HAP-1 (cell line): ENCODE measurements at regions of chrX and their contacts with region 1.

Region 1: GRCh38 chrX:9708904-9709553 is 56.6 kb downstream of the GPR143 start:
- DNase-seq: peak; percentile 72 to 88
- H3K4me3 ChIP-seq: no peak overlapping the region
- H3K4me1 ChIP-seq: peaks cover 3% of the 10 kb centered on the region
- H3K27me3 ChIP-seq: no peaks in the 10 kb centered on the region

Region 2: DNA sequence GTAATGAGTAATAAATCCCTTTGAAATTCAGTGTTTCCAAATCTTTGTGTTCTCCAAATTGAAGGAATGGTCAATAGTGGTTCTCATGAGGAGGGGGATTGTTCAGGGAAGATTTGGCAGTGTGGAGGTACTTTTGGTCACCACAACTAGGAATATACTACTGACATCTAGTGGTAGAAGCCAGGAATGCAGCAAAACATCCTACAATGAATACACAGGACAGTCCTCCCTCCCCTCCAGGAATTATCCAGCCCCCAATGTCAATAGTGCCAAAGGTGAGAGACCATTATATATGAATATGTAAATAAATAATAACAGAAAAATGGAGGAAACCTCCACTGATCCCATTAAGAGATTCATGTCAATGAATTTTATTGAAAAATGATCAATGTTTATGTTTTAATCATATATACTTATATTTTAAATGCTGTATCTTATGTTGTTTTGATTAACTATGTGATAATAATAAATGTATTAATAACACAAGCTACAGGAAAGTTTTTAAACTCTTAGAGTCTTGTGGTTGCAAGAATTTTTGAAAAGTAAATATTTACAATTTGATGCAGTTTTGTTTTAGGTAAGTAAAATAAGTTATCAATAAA is 893.5 kb before region 1 on chrX:
- in situ Hi-C with region 1: loop called (anchors 10 kb)
- DNase-seq: peak; percentile 12 to 54
- H3K4me3 ChIP-seq: no peak overlapping the region
- H3K4me1 ChIP-seq: no peaks in the 10 kb centered on the region
- H3K27me3 ChIP-seq: peaks cover 2% of the 10 kb centered on the region; the same call in 1 of the 2 replicates

Region 3: DNA sequence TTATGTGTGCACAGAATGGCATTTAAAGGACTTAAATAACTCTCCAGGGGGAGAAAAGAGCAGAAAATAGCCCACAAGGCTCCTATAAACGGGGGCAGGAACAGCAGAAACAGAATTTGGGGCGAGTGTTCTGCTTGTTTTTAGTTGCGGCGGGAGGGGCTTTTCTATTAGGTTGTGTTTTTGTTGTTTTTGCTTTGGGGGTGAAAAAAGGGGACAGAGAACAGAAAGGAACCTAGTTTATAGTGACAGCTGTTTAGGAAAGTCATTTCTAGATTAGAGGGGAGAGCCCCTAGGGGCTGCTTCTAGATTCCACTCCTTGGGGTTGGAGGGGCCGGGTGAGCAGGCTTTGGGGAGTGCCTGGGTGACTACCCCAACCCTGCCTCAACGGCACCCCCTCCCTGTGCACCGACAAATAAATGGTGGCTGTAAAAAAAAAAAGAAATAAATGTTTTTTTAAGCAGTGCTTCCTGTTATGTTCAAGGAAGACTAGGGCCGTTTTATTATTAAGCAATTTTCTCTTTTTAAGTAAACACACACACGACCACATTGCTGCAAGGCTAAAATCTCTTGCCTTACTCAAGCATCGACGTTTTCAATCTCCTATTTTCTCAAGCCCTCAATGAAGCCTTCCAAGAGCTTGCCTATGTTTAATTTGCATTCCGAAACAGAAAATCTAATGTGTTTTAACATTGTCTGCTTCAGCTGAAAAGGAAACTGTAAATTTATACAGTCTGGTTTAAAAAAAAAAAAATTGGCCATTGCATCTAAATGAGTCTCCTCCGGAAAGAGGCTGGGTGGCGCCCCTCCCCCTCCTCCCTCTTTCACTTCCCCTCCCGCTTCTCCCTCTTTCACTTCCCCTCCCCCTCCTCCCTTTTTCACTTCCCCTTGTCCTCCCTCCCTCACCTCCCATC is 367.5 kb before region 1 on chrX:
- in situ Hi-C with region 1: loop called (anchors 25 kb)
- DNase-seq: peak; percentile 48 to 78
- H3K4me3 ChIP-seq: no peak overlapping the region
- H3K4me1 ChIP-seq: peaks cover 18% of the 10 kb centered on the region
- H3K27me3 ChIP-seq: no peaks in the 10 kb centered on the region

Region 4: DNA sequence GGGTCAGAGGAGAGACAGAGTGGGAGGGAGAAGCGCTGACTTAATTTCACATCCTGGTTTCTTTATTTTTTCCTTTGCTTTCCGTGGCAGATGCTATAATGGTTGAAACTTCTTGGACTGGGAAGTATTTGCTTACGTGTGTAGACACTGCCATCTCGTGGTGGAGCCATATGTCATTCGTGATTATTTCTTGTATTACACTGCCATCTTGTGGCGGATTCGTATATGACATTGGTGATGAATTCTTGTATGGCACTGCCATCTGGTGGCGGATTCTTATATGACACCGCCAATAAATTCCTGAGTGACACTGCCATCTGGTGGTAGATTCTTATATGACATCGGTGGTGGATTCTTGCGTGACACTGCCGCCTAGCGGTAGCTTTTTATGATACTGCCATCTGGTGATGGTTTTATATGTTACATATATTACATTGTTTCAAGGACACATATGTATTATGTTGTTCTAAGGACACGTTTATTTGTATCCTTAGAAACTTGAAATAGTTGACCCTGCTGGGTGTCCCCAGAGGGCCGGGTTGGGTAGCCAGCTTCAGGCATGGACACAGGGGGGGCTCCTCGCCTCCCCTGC is 410.5 kb after region 1 on chrX:
- in situ Hi-C with region 1: loop called (anchors 25 kb)
- DNase-seq: peak; percentile 52 to 83
- H3K4me3 ChIP-seq: no peak overlapping the region
- H3K4me1 ChIP-seq: no peaks in the 10 kb centered on the region
- H3K27me3 ChIP-seq: no peaks in the 10 kb centered on the region